ENCODE measurements at regions of chr18 and their contacts with region 1.

Region 1: DNA sequence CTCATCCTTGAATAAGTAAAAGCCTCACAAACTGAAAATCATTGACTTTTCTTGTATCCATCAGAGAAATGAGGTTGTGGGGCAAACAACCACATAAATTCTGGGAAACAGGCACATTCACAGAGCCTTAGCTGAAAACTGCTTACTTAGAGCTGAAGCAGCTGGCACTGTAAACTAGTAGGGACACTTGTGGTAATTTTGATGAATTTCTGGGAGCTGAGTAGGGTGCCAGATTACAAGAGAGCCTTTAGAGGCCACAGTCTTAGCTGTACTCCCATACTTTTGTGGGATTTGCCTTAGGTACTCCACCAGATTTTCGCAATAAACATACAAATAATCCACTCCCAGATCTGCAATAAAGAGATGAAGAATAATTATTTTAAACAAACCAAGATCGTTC is 315.2 kb downstream of the TMX3 start:
- DNase-seq: no peak
- H3K4me3 Mint-ChIP-seq: no peak overlapping the region
- H3K27ac Mint-ChIP-seq: no peak overlapping the region
- H3K4me1 Mint-ChIP-seq: peaks cover 11% of the 10 kb centered on the region
- H3K27me3 Mint-ChIP-seq: no peaks in the 10 kb centered on the region
- CTCF ChIP-seq: no peak

Region 2: DNA sequence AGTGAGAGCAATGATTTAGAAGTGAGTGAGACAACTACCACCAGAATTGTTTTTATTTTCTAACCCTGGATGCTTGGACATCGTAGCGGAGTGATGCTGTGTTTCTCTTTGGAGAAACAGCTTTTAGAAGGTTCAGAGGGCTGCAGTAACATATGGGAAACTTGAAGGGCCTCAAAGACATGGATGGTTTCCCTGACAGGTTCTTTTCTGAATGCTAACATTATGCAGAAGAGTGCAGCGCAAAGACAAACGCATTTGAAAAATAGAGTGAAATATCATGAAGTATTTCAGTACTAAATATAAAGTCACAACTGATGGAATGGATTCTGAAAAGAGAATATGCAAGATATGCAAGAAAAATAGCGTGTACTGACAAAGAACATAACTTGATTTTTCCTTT is 498.1 kb before region 1 on chr18:
- CTCF ChIA-PET with region 1: no interaction called
- POLR2A ChIA-PET with region 1: no interaction called
- intact Hi-C with region 1: no loop called
- DNase-seq: no peak
- H3K4me3 Mint-ChIP-seq: no peak overlapping the region
- H3K27ac Mint-ChIP-seq: no peak overlapping the region
- H3K4me1 Mint-ChIP-seq: no peaks in the 10 kb centered on the region
- H3K27me3 Mint-ChIP-seq: no peaks in the 10 kb centered on the region
- CTCF ChIP-seq: no peak

Region 3: DNA sequence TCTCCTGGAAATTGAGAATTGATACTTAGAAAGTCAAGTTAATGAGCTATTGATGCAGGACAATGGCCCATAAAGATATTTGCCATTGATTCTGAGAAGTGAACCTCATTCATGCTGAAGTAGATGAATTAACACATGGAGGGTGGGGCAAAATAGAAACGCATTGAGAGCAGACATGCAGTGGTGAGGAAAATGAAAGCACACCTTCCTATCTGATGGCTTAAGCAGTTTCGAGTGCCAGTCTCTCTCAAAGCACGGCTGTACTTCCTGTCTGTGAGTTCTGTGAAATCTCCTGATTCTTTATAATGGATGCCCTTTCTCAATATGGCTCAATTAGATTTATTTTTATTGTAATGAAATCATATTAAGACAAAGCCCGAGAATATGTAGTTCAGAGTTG is 68.2 kb after region 1 on chr18:
- CTCF ChIA-PET with region 1: no interaction called
- POLR2A ChIA-PET with region 1: no interaction called
- intact Hi-C with region 1: loop called (anchors 2 kb)
- DNase-seq: no peak
- H3K4me3 Mint-ChIP-seq: no peak overlapping the region
- H3K27ac Mint-ChIP-seq: no peak overlapping the region
- H3K4me1 Mint-ChIP-seq: no peaks in the 10 kb centered on the region
- H3K27me3 Mint-ChIP-seq: no peaks in the 10 kb centered on the region
- CTCF ChIP-seq: no peak

Measured in MCF 10A (cell line).